ENCODE measurements at regions of chr7 and their contacts with region 1.

Region 1: DNA sequence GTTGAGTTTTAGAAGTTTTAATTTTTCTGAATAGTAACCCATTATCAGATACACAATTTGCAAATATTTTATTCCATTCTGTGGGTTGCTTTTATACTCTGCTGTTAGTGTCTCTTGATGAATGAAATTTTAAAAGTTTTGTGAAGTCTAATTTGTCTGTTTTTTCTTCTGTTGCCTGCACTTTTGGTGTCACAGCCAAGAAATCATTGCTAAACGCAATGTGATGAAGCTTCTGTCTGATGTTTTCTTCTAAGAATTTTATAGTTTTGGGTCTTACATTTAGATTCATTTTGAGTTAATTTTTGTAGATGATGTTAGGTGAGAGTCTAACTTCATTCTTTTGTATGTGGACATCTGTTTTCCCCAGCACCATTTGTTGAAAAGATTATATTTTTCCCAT is 330.0 kb upstream of the FOXK1 start:
- DNase-seq: no peak
- H3K4me3 ChIP-seq: no peak overlapping the region
- H3K27ac ChIP-seq: no peak overlapping the region
- H3K4me1 ChIP-seq: no peaks in the 10 kb centered on the region
- H3K27me3 ChIP-seq: no peaks in the 10 kb centered on the region
- CTCF ChIP-seq: no peak
- POLR2A ChIP-seq: no peak

Region 2: DNA sequence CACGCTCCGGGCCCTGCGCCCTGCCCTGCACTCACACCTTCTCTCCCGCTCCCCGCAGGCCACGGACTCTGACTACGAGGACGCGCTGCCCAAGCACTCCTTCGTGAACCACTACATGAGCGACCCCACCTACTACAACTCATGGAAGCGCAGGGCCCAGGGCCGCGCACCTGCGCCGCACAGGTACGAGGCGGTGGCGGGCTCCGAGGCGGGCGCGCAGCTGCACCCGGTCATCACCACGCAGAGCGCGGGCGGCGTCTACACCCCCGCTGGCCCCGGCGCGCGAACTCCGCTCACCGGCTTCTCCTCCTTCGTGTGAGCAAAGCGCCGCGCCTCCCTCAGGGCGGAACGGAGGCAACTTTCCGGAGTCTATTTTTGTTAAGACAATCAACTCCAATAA is 87.0 kb before region 1 on chr7:
- intact Hi-C with region 1: no loop called
- DNase-seq: no peak
- H3K4me3 ChIP-seq: no peak overlapping the region
- H3K27ac ChIP-seq: no peak overlapping the region
- H3K4me1 ChIP-seq: no peaks in the 10 kb centered on the region
- H3K27me3 ChIP-seq: no peaks in the 10 kb centered on the region
- CTCF ChIP-seq: no peak
- POLR2A ChIP-seq: no peak

Region 3: DNA sequence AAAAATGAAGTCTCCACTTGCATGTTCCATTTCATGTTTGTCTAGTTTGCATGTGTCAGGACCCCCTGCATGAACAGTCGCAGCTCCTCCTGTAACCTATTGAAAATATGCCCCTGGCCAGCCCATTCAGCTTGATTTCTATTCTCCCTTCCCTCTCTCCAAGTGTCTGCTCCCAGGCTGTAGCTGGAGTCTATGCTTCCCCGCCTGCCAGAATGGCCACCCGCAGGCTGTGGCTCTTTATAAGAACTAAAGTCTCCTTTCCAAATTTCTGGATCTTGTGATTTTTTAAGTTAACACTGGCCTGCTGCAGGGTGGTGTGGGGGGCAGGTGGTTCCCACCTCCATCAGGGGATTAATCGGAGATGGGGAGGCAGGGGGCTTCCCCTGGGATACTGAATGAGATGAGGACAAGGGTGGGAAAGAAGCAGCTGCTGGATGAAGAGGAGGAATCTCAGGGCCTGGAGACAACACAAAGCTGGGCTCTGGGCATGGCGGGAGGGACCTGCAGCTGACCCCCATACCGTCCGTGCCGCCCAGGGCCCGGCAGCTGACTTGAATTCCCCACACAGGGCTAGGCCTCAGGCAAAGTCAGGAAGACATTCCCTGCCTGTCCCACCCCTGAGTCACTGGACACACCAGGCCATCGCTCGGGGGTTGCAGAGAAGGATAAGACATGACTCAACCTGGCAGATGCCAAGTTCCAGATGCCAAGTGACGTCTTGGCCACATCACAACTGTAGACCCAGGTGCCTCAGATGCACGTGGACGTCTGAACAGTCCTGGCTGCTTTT is 69.4 kb before region 1 on chr7:
- intact Hi-C with region 1: no loop called
- DNase-seq: no peak
- H3K4me3 ChIP-seq: no peak overlapping the region
- H3K27ac ChIP-seq: no peak overlapping the region
- H3K4me1 ChIP-seq: no peaks in the 10 kb centered on the region
- H3K27me3 ChIP-seq: no peaks in the 10 kb centered on the region
- CTCF ChIP-seq: no peak
- POLR2A ChIP-seq: no peak

Region 4: GRCh38 chr7:4416396-4417056 is 64.5 kb after region 1 on chr7:
- intact Hi-C with region 1: loop called (anchors 10 kb)
- DNase-seq: no peak
- H3K4me3 ChIP-seq: no peak overlapping the region
- H3K27ac ChIP-seq: no peak overlapping the region
- H3K4me1 ChIP-seq: no peaks in the 10 kb centered on the region
- H3K27me3 ChIP-seq: no peaks in the 10 kb centered on the region
- CTCF ChIP-seq: no peak
- POLR2A ChIP-seq: no peak